PC-3 (cell line): ENCODE measurements at regions of chr12 and their contacts with region 1.

Region 1: GRCh38 chr12:69639400-69640016 is 28.8 kb upstream of the LRRC10 start:
- DNase-seq: peak; percentile 82
- ATAC-seq: peak; percentile 97
- H3K4me3 ChIP-seq: no peak overlapping the region
- H3K27ac ChIP-seq: no peak overlapping the region
- H3K4me1 ChIP-seq: no peaks in the 10 kb centered on the region
- H3K27me3 ChIP-seq: no peaks in the 10 kb centered on the region
- CTCF ChIP-seq: peak; percentile 93

Region 2: GRCh38 chr12:69290545-69291277 is 348.8 kb before region 1 on chr12:
- CTCF ChIA-PET with region 1: interaction called, 3 read pairs
- POLR2A ChIA-PET with region 1: no interaction called
- intact Hi-C with region 1: loop called (anchors 1 kb)
- DNase-seq: peak; percentile 90
- ATAC-seq: peak; percentile 100
- H3K4me3 ChIP-seq: no peak overlapping the region
- H3K27ac ChIP-seq: no peak overlapping the region
- H3K4me1 ChIP-seq: no peaks in the 10 kb centered on the region
- H3K27me3 ChIP-seq: peaks cover 3% of the 10 kb centered on the region; the same call in 1 of the 2 replicates
- CTCF ChIP-seq: peak; percentile 96

Region 3: DNA sequence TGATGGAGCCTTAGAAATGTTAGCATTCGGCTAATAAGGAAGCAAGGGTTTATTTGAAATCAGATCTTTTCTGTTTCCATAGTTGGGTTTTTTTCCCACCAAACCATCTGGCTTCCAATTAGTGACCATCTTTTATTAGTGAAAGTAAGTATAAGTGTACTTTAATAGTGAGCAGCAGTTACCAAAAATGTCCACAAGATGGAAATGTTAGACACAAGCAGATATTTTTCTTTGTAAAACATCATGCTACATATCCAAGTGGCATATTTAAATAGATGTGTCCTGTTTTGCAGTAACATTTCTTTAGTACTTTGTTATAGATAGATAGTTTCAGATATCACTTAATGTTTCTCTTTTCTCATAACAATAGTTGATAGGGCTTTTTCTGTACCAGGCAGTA is 251.1 kb before region 1 on chr12:
- CTCF ChIA-PET with region 1: no interaction called
- POLR2A ChIA-PET with region 1: no interaction called
- intact Hi-C with region 1: loop called (anchors 1 kb)
- DNase-seq: peak; percentile 71
- ATAC-seq: peak; percentile 48; the same call in 1 of the 2 replicates
- H3K4me3 ChIP-seq: no peak overlapping the region
- H3K27ac ChIP-seq: no peak overlapping the region
- H3K4me1 ChIP-seq: 0 out of 2 replicates have a peak, but pooled peaks cover 7% of the 10 kb centered on the region
- H3K27me3 ChIP-seq: no peaks in the 10 kb centered on the region
- CTCF ChIP-seq: peak; percentile 76

Region 4: DNA sequence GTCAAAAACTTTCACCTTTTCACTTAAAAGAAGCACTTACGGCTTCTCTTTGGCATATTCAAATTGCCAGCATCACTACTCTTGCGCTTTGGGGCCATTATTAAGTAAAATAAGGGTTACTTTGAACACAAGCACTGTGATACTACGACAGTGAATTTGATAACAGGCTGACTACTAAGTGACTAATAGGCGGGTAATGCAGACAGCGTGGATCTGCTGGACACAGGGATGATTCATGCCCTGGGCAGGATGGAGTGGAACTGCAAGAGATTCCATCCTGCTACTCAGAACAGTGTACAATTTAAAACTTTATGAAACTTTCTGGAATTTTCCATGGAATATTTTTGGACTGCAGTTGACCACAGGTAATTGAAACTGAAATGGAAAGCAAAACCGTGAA is 234.0 kb before region 1 on chr12:
- CTCF ChIA-PET with region 1: no interaction called
- POLR2A ChIA-PET with region 1: no interaction called
- intact Hi-C with region 1: no loop called
- DNase-seq: peak; percentile 94
- ATAC-seq: peak; percentile 100
- H3K4me3 ChIP-seq: no peak overlapping the region; the same call in 1 of the 2 replicates
- H3K27ac ChIP-seq: no peak overlapping the region
- H3K4me1 ChIP-seq: peaks cover 18% of the 10 kb centered on the region
- H3K27me3 ChIP-seq: no peaks in the 10 kb centered on the region
- CTCF ChIP-seq: no peak

Region 5: GRCh38 chr12:69415471-69416275 is 223.8 kb before region 1 on chr12:
- CTCF ChIA-PET with region 1: no interaction called
- POLR2A ChIA-PET with region 1: no interaction called
- intact Hi-C with region 1: loop called (anchors 1 kb)
- DNase-seq: peak; percentile 75
- ATAC-seq: peak; percentile 92
- H3K4me3 ChIP-seq: no peak overlapping the region
- H3K27ac ChIP-seq: no peak overlapping the region
- H3K4me1 ChIP-seq: no peaks in the 10 kb centered on the region
- H3K27me3 ChIP-seq: no peaks in the 10 kb centered on the region
- CTCF ChIP-seq: peak; percentile 84

Region 6: GRCh38 chr12:69585189-69586062 is 54.1 kb before region 1 on chr12 and contains the start of gene CCT2:
- CTCF ChIA-PET with region 1: no interaction called
- POLR2A ChIA-PET with region 1: no interaction called
- intact Hi-C with region 1: no loop called
- DNase-seq: peak; percentile 97
- ATAC-seq: peak; percentile 95
- H3K4me3 ChIP-seq: peak within 1 kb of the TSS; percentile 96
- H3K27ac ChIP-seq: peak within 1 kb of the TSS; percentile 71
- H3K4me1 ChIP-seq: peaks cover 10% of the 10 kb centered on the region
- H3K27me3 ChIP-seq: no peaks in the 10 kb centered on the region
- CTCF ChIP-seq: 0 out of 2 replicates have a peak, but pooled peaks have one; percentile 20
- total RNA-seq, gene CCT2: 306 and 345 TPM in 2 replicates

Region 7: DNA sequence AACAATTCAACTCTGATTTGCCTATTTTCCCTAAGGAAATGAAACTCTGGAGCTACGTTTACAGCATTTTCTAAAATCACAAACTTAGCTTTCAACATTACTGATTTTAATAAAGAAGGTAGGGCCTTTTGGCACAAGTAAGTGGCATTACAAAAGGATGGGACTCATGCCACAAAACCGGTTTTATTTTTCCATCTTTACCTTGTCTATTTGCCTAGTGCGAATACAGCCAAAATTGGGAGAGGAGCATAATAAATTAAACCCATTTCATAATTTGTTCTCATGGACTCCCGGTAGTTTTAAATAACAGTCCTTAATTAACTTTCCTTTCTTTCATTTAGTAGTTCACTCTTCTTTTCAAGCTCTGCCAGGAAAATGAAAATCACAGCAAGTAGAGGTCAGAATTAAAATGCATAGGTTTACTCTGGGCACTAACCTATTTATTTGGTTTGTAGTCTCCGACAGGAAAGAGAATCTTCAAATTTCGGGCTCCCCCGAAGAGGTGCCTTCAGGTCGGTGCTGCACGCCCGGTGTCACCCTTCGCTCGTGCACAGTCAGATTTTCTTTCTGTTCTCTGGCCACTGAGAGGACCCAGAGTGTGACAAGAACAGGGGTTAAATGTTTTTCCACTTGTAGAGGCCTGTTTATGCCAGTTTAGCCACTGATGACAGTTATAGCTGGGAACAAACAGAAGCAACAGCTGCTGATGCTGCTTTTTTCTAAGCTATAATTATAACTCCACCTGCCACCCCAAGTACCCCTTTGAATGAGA is 59.4 kb after region 1 on chr12 and contains the start of gene BEST3:
- CTCF ChIA-PET with region 1: no interaction called
- POLR2A ChIA-PET with region 1: no interaction called
- intact Hi-C with region 1: no loop called
- DNase-seq: peak; percentile 56
- ATAC-seq: no peak
- H3K4me3 ChIP-seq: peak within 1 kb of the TSS; percentile 23; the same call in 1 of the 2 replicates
- H3K27ac ChIP-seq: no peak within 1 kb of the TSS
- H3K4me1 ChIP-seq: peaks cover 9% of the 10 kb centered on the region
- H3K27me3 ChIP-seq: no peaks in the 10 kb centered on the region
- CTCF ChIP-seq: no peak
- total RNA-seq, gene BEST3: 0.55 TPM in 1 of 2 replicates, not detected in the other

Region 8: DNA sequence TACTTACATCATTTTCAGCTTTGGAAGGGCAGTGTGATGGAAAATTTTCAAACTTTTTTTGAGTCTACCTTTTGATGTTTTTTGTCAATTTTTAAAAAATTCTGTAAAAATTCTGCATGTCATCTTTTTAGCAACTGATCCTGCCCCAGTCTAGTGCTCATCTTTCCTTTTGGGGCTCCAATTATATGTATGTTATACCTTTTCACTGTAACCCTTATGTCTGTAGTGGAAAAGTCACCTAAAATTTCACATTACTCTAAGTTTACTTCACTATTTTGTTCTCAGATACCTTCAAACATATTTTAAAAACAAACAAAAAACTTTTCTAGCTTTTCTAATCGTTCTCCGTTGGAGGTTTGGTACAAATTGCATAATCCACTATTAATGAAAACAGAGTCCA is 153.0 kb after region 1 on chr12:
- CTCF ChIA-PET with region 1: no interaction called
- POLR2A ChIA-PET with region 1: no interaction called
- intact Hi-C with region 1: no loop called
- DNase-seq: no peak
- ATAC-seq: no peak
- H3K4me3 ChIP-seq: no peak overlapping the region
- H3K27ac ChIP-seq: no peak overlapping the region
- H3K4me1 ChIP-seq: no peaks in the 10 kb centered on the region
- H3K27me3 ChIP-seq: no peaks in the 10 kb centered on the region
- CTCF ChIP-seq: no peak